Vagina (tissue), 2 donors: ENCODE measurements at regions of chr17 and their contacts with region 1.

Region 1: DNA sequence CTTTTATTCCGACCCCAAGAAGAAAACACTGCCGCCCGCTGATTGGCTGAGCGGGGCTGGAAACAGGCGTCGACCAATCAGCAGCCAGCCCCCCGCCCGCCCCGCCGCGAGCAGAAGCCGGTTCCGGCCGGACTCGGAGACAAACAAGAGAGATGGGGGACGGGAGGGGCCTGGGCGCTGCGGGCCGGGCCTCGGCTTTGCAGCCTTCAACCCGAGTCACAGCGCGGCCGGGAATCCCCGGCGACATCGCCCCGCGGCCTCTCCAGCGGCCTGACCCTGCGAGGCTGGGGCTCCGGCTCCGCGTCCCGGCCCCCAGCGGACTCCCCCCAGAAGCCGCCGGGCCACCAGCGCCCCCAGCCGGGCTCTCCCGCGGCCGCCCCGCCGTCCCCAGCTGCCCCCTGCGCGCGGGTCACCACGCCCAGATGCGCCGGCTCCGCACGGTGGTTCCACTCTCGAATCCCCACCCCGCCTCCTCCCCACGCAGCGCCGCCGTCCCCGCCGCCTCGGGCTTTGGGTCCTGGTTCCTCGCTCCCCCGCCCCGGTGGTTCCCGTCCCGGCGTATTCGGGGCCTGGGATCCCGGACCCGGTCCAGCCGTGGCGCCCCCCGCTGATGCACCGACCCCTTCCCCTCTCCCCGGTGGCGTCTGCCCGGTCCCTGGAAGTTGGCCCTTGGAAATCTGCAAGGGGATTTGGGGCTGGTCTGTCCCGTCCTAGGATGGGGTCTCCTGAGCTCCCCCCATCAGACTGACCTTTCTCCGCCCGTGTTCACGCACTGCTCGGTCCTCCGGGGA is 417 bp upstream of the SLC43A2 start:
- DNase-seq: peak in 1 of 2 donors; percentile 97
- H3K4me3 ChIP-seq: peak overlapping the region; percentile 69 to 96
- H3K27ac ChIP-seq: peak overlapping the region; percentile 95
- H3K4me1 ChIP-seq: peaks cover 16% of the 10 kb centered on the region
- H3K27me3 ChIP-seq: no peaks in the 10 kb centered on the region
- CTCF ChIP-seq: peak in 2 of 3 experiments; percentile 18 to 39
- POLR2A ChIP-seq: no peak

Region 2: GRCh38 chr17:1216217-1217088 is 412.6 kb before region 1 on chr17:
- intact Hi-C with region 1: no loop called
- DNase-seq: no peak
- H3K4me3 ChIP-seq: no peak overlapping the region
- H3K27ac ChIP-seq: no peak overlapping the region
- H3K4me1 ChIP-seq: no peaks in the 10 kb centered on the region
- H3K27me3 ChIP-seq: no peaks in the 10 kb centered on the region
- CTCF ChIP-seq: no peak
- POLR2A ChIP-seq: no peak

Region 3: DNA sequence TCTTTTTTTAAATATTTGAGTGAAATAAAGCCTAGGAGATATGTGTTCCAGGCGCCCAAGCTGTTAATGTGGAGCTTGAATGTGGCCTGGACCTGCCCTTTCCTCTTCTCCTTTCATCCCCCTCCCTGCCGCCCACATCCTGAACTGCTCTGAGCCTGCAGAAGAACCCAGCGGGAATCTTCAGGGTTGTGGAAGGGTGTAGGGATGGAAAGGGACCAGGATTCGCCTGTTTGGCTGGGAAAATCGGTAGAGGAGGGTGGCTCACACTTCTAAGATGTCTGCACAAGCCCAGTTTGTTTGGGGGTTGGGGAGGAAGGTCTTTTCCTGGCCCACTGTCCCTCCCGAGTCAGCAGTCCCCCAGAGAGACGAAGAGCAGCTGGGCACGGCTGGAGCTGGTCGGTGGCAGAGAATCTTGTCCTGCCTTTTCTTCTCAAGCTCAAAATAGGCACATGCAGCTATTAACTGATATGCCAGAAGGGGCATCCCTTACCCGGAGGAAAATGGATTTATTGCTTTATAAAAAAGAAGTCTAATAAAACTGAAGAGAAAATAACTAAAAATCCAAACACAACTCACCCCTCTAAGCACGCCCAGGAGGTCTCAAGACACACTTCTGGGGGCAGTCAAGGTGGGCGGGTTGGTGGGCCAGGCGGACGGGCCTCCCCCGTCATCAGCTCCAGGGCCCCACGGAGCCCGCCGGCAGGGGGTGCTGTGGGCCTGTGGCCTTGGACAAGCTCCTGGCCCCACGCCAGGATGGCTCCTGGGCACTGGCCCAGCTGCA is 54.9 kb before region 1 on chr17:
- intact Hi-C with region 1: loop called (anchors 2 kb)
- DNase-seq: no peak
- H3K4me3 ChIP-seq: no peak overlapping the region
- H3K27ac ChIP-seq: peak overlapping the region; percentile 80
- H3K4me1 ChIP-seq: peaks cover 28% of the 10 kb centered on the region
- H3K27me3 ChIP-seq: no peaks in the 10 kb centered on the region
- CTCF ChIP-seq: peak; percentile 89 to 97 (median 91)
- POLR2A ChIP-seq: no peak

Region 4: GRCh38 chr17:1611715-1612114 is 17.3 kb before region 1 on chr17:
- intact Hi-C with region 1: no loop called
- DNase-seq: no peak
- H3K4me3 ChIP-seq: no peak overlapping the region
- H3K27ac ChIP-seq: no peak overlapping the region
- H3K4me1 ChIP-seq: no peaks in the 10 kb centered on the region
- H3K27me3 ChIP-seq: no peaks in the 10 kb centered on the region
- CTCF ChIP-seq: no peak
- POLR2A ChIP-seq: no peak